ENCODE measurements at regions of chr1 and their contacts with region 1.

Region 1: GRCh38 chr1:224996266-224996665 is 66.8 kb downstream of the DNAH14 start:
- DNase-seq: peak; percentile 16
- H3K4me3 Mint-ChIP-seq: no peak overlapping the region
- H3K27ac Mint-ChIP-seq: peak overlapping the region; percentile 25
- H3K4me1 Mint-ChIP-seq: peaks cover 38% of the 10 kb centered on the region
- H3K27me3 Mint-ChIP-seq: no peaks in the 10 kb centered on the region
- CTCF ChIP-seq: no peak

Region 2: GRCh38 chr1:224774378-224774777 is 221.9 kb before region 1 on chr1:
- CTCF ChIA-PET with region 1: no interaction called
- intact Hi-C with region 1: no loop called
- DNase-seq: peak; percentile 6
- H3K4me3 Mint-ChIP-seq: no peak overlapping the region
- H3K27ac Mint-ChIP-seq: no peak overlapping the region
- H3K4me1 Mint-ChIP-seq: no peaks in the 10 kb centered on the region
- H3K27me3 Mint-ChIP-seq: peaks cover 60% of the 10 kb centered on the region
- CTCF ChIP-seq: no peak

Region 3: DNA sequence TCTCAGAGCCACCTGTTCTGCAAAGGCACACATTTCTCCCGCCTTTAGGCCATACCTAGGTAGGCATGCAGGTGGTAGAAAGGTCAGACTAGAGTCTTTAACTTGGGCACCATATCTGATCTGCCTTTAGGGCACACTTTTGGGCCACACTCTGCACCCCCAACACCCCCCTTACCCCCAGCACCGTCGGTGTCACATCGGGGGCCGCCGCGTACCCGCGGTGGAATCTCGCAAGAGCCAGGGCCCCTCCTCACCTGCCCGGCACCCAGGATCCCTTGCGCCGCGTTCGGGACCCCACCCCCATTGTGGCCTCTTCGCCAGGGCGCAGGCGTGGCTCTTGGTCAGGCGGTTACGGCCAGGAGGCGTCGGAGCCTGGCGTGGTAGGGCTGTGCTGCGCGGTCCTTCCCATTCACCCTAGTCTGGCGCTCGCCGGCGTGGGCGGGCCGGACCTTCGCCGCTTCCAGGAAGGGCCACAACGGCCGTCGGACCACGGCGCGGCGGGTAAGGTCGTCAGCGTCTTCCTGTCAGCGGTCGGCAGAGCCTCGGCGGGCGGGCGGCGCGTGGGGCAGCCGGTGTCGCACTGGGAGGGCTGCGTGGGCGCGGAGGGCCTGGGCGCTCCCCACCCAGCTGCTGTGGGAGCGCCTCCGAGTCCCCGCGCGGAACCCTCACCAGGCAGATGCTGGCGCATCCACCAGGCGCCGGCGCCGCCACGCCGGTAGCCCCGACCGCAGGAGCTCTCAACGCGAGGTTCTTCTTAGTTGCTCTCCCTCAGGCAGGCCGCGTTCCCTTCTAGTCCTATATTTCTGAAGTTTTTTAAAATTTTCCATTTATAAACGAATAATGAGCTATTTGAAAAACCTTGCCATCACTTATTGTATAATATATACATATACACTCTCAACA is 66.7 kb before region 1 on chr1 and contains the start of gene DNAH14:
- CTCF ChIA-PET with region 1: no interaction called
- intact Hi-C with region 1: loop called (anchors 5 kb)
- DNase-seq: peak; percentile 96
- H3K4me3 Mint-ChIP-seq: peak within 1 kb of the TSS; percentile 99
- H3K27ac Mint-ChIP-seq: peak within 1 kb of the TSS; percentile 90
- H3K4me1 Mint-ChIP-seq: no peaks in the 10 kb centered on the region
- H3K27me3 Mint-ChIP-seq: no peaks in the 10 kb centered on the region
- CTCF ChIP-seq: no peak
- total RNA-seq, gene DNAH14: 64.3 and 66.8 TPM in 2 replicates

Measured in Calu3 (cell line).